WTC11 (cell line): ENCODE measurements at regions of chr16 and their contacts with region 1.

Region 1: DNA sequence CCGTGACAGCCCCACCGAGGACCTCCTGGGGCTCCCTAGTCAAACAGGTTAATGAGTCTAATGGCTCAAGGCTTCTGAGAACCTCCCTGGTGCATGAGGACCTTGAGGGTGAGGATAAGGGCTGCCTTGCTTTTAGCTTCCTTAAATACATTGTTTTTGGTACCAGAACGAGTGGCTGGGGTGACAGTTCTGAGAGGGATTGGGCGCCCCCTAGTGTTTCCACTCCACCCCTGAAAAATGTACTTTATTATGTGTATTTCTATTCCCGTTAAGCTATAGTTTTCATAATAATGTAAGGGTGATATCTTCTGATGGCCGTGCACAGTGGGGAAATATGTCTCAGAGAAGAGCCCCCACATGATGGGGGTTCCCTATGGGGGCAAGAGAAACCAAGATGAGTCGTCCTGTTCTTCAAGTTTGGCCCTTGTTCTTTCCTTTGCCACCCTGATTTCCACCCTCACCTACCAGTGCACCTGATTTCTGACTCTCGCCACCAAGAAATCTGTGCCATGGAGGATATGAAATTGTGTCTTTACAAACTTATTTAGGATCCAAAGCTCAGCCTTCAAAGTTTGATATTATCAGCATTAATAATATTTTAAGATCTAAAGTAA is 14.5 kb upstream of the VWA3A start:
- DNase-seq: peak; percentile 74
- ATAC-seq: peak; percentile 95
- H3K4me3 Mint-ChIP-seq: no peak overlapping the region
- H3K27ac Mint-ChIP-seq: no peak overlapping the region
- H3K4me1 Mint-ChIP-seq: no peaks in the 10 kb centered on the region; the same call in 1 of the 2 replicates
- H3K27me3 Mint-ChIP-seq: no peaks in the 10 kb centered on the region
- CTCF ChIP-seq: peak; percentile 86

Region 2: DNA sequence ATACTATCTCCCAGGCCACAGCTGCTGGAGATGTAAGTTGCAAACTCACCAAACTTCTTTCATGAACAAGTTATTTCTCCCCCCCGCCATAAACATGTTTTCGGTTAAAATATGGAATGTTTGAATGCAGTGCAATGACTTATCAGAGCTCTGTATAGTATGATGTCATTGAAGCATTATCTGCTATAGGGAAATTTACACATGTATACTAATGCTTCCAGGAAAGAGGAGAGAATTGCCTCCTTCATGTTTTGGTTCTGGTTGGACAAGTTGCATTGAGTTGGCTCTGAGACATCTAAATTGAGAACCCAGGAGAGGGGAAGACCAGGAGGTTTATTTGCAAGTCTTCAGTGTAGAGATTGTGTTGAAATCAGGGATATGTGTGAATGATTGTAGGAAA is 103.9 kb before region 1 on chr16:
- CTCF ChIA-PET with region 1: no interaction called
- POLR2A ChIA-PET with region 1: no interaction called
- DNase-seq: no peak
- ATAC-seq: no peak
- H3K4me3 Mint-ChIP-seq: no peak overlapping the region
- H3K27ac Mint-ChIP-seq: no peak overlapping the region
- H3K4me1 Mint-ChIP-seq: no peaks in the 10 kb centered on the region
- H3K27me3 Mint-ChIP-seq: no peaks in the 10 kb centered on the region
- CTCF ChIP-seq: no peak

Region 3: GRCh38 chr16:21989133-21989532 is 88.7 kb before region 1 on chr16:
- CTCF ChIA-PET with region 1: interaction called, 38 read pairs
- POLR2A ChIA-PET with region 1: interaction called, 3 read pairs
- DNase-seq: no peak
- ATAC-seq: no peak
- H3K4me3 Mint-ChIP-seq: no peak overlapping the region
- H3K27ac Mint-ChIP-seq: no peak overlapping the region
- H3K4me1 Mint-ChIP-seq: peaks cover 5% of the 10 kb centered on the region; the same call in 1 of the 2 replicates
- H3K27me3 Mint-ChIP-seq: no peaks in the 10 kb centered on the region
- CTCF ChIP-seq: no peak

Region 4: GRCh38 chr16:22007509-22008214 is 70.1 kb before region 1 on chr16 and contains the start of gene MOSMO:
- CTCF ChIA-PET with region 1: interaction called, 140 read pairs
- POLR2A ChIA-PET with region 1: interaction called, 5 read pairs
- DNase-seq: peak; percentile 66
- ATAC-seq: peak; percentile 82
- H3K4me3 Mint-ChIP-seq: peak within 1 kb of the TSS; percentile 90
- H3K27ac Mint-ChIP-seq: peak within 1 kb of the TSS; percentile 21; the same call in 1 of the 2 replicates
- H3K4me1 Mint-ChIP-seq: peaks cover 12% of the 10 kb centered on the region
- H3K27me3 Mint-ChIP-seq: peaks cover 13% of the 10 kb centered on the region
- CTCF ChIP-seq: no peak
- total RNA-seq, gene MOSMO: 10.7 to 11.6 TPM (median 10.7 TPM) in 3 replicates

Region 5: GRCh38 chr16:22063888-22064467 is 13.8 kb before region 1 on chr16:
- CTCF ChIA-PET with region 1: interaction called, 98 read pairs
- POLR2A ChIA-PET with region 1: no interaction called
- DNase-seq: no peak
- ATAC-seq: no peak
- H3K4me3 Mint-ChIP-seq: no peak overlapping the region
- H3K27ac Mint-ChIP-seq: peak overlapping the region; percentile 76
- H3K4me1 Mint-ChIP-seq: peaks cover 23% of the 10 kb centered on the region
- H3K27me3 Mint-ChIP-seq: no peaks in the 10 kb centered on the region
- CTCF ChIP-seq: no peak

Region 6: DNA sequence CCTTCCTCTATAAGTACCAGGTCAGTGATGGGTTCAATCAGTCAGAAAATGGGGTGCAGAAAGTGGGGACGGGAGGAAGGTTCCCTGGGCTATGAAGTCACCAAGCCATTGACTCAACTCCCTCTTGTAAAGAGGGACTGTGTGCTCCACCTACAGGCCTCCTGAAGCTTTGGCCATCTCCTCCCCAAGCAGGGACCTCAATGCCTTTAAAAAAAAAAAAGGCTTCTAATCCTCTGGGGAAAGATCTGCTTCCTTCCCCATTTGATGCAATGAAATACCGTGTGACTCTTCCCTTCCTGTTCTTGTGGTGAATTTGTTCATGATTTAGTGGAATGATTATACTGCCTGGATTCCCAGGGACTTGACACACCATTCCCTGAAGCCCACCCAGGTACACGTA is 45.3 kb after region 1 on chr16:
- CTCF ChIA-PET with region 1: interaction called, 10 read pairs
- POLR2A ChIA-PET with region 1: no interaction called
- DNase-seq: no peak
- ATAC-seq: peak; percentile 81
- H3K4me3 Mint-ChIP-seq: no peak overlapping the region
- H3K27ac Mint-ChIP-seq: no peak overlapping the region
- H3K4me1 Mint-ChIP-seq: no peaks in the 10 kb centered on the region
- H3K27me3 Mint-ChIP-seq: peaks cover 6% of the 10 kb centered on the region; the same call in 1 of the 2 replicates
- CTCF ChIP-seq: no peak

Region 7: DNA sequence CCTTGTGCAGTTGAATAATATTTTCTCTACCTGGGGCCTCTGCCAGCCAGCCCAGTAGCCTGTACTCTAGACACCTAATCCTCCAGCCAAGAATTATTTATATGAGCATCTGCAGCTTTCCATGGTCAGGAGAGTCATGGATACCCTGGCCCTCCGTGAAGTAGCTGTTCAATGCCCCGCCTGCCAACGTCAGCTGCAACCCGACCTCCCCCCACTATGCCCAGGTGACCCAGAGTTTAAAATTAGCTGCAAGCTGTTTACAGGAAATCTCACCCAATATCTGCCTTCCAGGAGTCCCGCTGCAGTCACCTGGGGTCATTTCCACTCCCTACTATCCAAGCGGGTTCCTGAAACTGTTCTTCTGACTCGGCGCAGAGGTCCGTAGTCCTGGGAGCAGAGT is 96.8 kb after region 1 on chr16:
- CTCF ChIA-PET with region 1: interaction called, 21 read pairs
- POLR2A ChIA-PET with region 1: no interaction called
- DNase-seq: no peak
- ATAC-seq: no peak
- H3K4me3 Mint-ChIP-seq: no peak overlapping the region
- H3K27ac Mint-ChIP-seq: no peak overlapping the region
- H3K4me1 Mint-ChIP-seq: no peaks in the 10 kb centered on the region
- H3K27me3 Mint-ChIP-seq: no peaks in the 10 kb centered on the region
- CTCF ChIP-seq: no peak

Region 8: DNA sequence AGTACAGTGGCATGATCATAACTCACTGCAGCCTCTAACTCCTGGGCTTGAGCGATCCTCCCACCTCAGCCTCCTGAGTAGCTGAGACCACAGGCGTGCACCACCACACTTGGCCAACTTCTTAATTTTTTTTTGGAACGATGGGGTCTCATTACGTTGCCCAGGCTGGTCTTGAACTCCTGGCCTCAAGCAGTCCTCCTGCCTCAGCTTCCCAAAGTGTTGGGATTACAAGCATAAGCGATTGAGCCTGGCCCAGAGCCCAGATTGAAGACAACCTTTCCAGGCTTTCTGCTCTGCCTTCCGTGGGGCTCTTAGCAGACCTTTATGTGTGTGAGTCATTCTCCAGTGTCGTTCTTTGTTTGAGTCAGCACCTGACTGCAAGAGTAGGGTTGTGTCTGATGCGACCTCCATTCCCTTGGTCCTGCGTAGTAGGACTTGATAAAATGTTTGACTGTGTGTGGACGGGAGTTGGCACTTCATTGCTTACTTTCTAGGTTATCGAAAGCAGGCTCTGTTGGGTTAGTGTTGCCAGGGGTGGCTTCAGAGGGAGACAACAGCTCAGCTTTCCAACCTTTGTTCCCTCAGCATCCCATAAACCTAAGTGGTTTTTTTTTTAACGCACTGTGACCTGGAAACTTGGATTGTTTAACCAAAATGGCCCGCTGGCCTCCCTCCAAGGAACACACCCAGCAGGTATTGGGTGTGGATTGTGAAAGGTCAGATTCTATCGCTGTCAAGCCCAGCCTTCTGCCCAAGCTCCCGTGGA is 154.7 kb after region 1 on chr16:
- CTCF ChIA-PET with region 1: no interaction called
- POLR2A ChIA-PET with region 1: no interaction called
- DNase-seq: no peak
- ATAC-seq: no peak
- H3K4me3 Mint-ChIP-seq: no peak overlapping the region
- H3K27ac Mint-ChIP-seq: peak overlapping the region; percentile 70; the same call in 1 of the 2 replicates
- H3K4me1 Mint-ChIP-seq: no peaks in the 10 kb centered on the region
- H3K27me3 Mint-ChIP-seq: no peaks in the 10 kb centered on the region
- CTCF ChIP-seq: no peak